ENCODE measurements at regions of chr18 and their contacts with region 1.

Region 1: DNA sequence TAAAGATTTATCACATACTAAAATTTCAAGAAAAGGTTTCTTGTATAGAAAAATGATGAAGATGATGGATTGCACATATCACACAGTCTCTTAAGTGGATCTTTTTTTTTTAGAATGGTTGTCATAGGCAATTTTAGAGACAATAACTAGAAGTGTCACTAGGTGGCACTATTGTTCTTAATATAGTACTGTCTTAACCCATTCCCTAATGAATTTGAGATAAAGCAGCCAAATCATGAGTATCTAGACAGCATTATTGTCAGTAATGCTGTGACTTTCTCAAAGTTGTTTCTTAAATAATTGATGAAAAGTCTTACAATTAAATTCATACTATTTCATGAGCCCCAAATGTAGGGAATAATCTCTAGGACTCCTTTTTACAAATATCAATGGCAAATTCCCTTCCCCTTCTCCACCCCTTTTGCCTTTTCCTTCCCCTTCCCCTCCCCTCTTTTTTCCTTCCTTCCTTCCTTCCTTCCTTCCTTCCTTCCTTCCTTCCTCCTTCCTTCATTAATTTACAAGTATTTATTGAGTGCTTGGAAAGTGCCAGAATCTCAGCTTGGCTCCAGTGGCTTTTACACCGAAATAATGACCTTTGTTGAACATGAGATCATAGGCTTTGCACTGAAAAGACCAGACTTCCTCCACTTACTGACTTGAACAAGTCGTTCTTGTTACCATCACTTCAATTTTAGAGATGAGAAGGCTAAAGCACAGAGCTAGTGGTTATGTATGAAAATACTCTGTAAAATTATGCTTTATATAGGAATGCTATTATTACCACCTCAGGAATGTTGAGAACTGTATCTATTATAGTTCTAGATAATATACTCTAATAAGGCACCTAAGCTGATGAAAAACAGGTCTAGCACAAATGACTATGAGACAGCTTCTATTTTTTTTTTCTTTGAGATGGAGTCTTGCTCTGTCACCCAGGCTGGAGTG is 19.8 kb downstream of the MYL12B start:
- DNase-seq: no peak
- ATAC-seq: peak; percentile 69
- H3K4me3 ChIP-seq: no peak overlapping the region
- H3K27ac ChIP-seq: no peak overlapping the region
- H3K4me1 ChIP-seq: peaks cover 24% of the 10 kb centered on the region
- H3K27me3 ChIP-seq: no peaks in the 10 kb centered on the region
- CTCF ChIP-seq: peak; percentile 35 to 66 (median 46); a peak in 4 of 6 replicates
- EP300 ChIP-seq: no peak
- POLR2A ChIP-seq: no peak
- RAD21 ChIP-seq: peak; percentile 75

Region 2: GRCh38 chr18:3012964-3013804 is 268.5 kb before region 1 on chr18 and contains the start of gene LPIN2:
- CTCF ChIA-PET with region 1: no interaction called
- POLR2A ChIA-PET with region 1: no interaction called
- RAD21 ChIA-PET with region 1: no interaction called
- SMC1A ChIA-PET with region 1: no interaction called
- in situ Hi-C with region 1: no loop called
- intact Hi-C with region 1: no loop called
- DNase-seq: peak; percentile 71
- ATAC-seq: peak; percentile 88
- H3K4me3 ChIP-seq: peak within 1 kb of the TSS; percentile 74
- H3K27ac ChIP-seq: peak within 1 kb of the TSS; percentile 71
- H3K4me1 ChIP-seq: peaks cover 14% of the 10 kb centered on the region
- H3K27me3 ChIP-seq: no peaks in the 10 kb centered on the region
- CTCF ChIP-seq: no peak
- EP300 ChIP-seq: peak in 1 of 2 experiments; percentile 44; a peak in 1 of 4 replicates
- POLR2A ChIP-seq: peak; percentile 61; the same call in 1 of the 2 replicates
- RAD21 ChIP-seq: no peak
- polyA plus RNA-seq, gene LPIN2: 4.1 to 4.5 TPM

Region 3: GRCh38 chr18:3261371-3262246 is 20.1 kb before region 1 on chr18 and contains the start of gene MYL12B:
- CTCF ChIA-PET with region 1: interaction called, 11 read pairs
- POLR2A ChIA-PET with region 1: interaction called, 6 read pairs
- RAD21 ChIA-PET with region 1: interaction called, 11 read pairs
- SMC1A ChIA-PET with region 1: interaction called, 41 read pairs
- in situ Hi-C with region 1: no loop called
- intact Hi-C with region 1: no loop called
- DNase-seq: no peak
- ATAC-seq: peak; percentile 80
- H3K4me3 ChIP-seq: peak within 1 kb of the TSS; percentile 84
- H3K27ac ChIP-seq: peak within 1 kb of the TSS; percentile 91
- H3K4me1 ChIP-seq: peaks cover 14% of the 10 kb centered on the region
- H3K27me3 ChIP-seq: no peaks in the 10 kb centered on the region
- CTCF ChIP-seq: no peak
- EP300 ChIP-seq: no peak
- POLR2A ChIP-seq: peak; percentile 95
- RAD21 ChIP-seq: no peak
- polyA plus RNA-seq, gene MYL12B: 662 to 739 TPM

Region 4: GRCh38 chr18:3297025-3297984 is 15.6 kb after region 1 on chr18:
- CTCF ChIA-PET with region 1: interaction called, 42 read pairs
- POLR2A ChIA-PET with region 1: interaction called, 3 read pairs
- RAD21 ChIA-PET with region 1: no interaction called
- SMC1A ChIA-PET with region 1: interaction called, 7 read pairs
- in situ Hi-C with region 1: no loop called
- intact Hi-C with region 1: no loop called
- DNase-seq: peak; percentile 69
- ATAC-seq: peak; percentile 99
- H3K4me3 ChIP-seq: peak overlapping the region; percentile 71
- H3K27ac ChIP-seq: peak overlapping the region; percentile 33
- H3K4me1 ChIP-seq: peaks cover 5% of the 10 kb centered on the region; the same call in 1 of the 2 replicates
- H3K27me3 ChIP-seq: no peaks in the 10 kb centered on the region; a peak in 1 of 4 replicates
- CTCF ChIP-seq: peak; percentile 74 to 92 (median 77)
- EP300 ChIP-seq: no peak
- POLR2A ChIP-seq: peak; percentile 90
- RAD21 ChIP-seq: peak; percentile 41

Region 5: DNA sequence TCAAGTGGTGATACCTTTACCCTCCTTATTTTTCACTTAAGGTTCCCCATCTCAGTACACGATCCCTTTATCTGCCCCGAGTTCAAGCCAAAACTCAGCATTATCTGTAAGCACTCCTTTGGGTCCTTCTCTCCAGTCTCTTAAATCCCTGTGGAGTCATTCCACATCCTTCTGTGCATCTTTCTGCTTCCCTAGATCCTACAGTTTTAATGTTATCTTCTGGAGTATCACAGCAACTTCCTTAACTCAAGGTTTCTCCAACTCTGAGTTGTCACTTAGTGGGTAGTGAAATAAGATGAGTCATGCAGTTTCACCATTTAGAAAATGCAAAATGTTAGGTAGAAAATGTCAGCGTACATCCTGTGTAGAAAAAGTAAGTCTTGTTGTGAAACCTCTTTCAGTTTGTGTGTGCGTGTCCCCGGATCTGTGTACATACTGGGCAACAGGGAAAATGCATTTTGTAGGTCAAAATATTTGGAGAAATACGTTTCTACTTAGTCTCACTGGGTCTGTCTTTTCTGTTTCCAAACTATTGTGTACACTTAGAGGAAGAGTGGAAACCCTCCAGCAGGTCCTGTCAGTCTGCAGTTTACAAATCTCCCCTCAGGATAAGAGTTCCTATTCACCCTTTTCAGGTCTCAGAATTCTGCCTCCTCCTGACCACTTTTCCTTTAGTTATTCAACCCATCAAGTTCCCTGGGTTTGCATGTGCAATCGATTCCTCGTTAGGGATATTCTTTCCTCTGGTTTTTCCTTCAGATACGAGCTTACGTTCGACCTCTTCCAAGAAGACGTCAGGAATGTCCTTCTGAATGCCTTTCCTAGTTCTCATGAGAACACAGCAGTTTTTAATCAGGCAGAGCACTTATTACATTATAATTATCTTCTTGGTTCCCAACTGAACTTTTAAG is 323.0 kb after region 1 on chr18:
- CTCF ChIA-PET with region 1: interaction called, 5 read pairs
- POLR2A ChIA-PET with region 1: no interaction called
- RAD21 ChIA-PET with region 1: interaction called, 10 read pairs
- SMC1A ChIA-PET with region 1: interaction called, 3 read pairs
- in situ Hi-C with region 1: loop called (anchors 5 kb)
- intact Hi-C with region 1: no loop called
- DNase-seq: peak; percentile 80
- ATAC-seq: peak; percentile 90
- H3K4me3 ChIP-seq: peak overlapping the region; percentile 57
- H3K27ac ChIP-seq: peak overlapping the region; percentile 80
- H3K4me1 ChIP-seq: peaks cover 25% of the 10 kb centered on the region
- H3K27me3 ChIP-seq: no peaks in the 10 kb centered on the region
- CTCF ChIP-seq: no peak
- EP300 ChIP-seq: peak; percentile 49 to 57; a peak in 2 of 4 replicates
- POLR2A ChIP-seq: 0 out of 2 replicates have a peak, but pooled peaks have one; percentile 32
- RAD21 ChIP-seq: no peak